ENCODE measurements at regions of chr19 and their contacts with region 1.

Region 1: GRCh38 chr19:29453596-29453995 is 72.2 kb upstream of the VSTM2B start:
- DNase-seq: no peak
- H3K4me3 ChIP-seq: no peak overlapping the region
- H3K27ac ChIP-seq: no peak overlapping the region
- H3K27me3 ChIP-seq: no peaks in the 10 kb centered on the region
- CTCF ChIP-seq: no peak

Region 2: GRCh38 chr19:28596561-28597071 is 857.0 kb before region 1 on chr19:
- CTCF ChIA-PET with region 1: no interaction called
- POLR2A ChIA-PET with region 1: interaction called, 10 read pairs
- DNase-seq: no peak
- H3K4me3 ChIP-seq: no peak overlapping the region
- H3K27ac ChIP-seq: no peak overlapping the region
- H3K27me3 ChIP-seq: no peaks in the 10 kb centered on the region
- CTCF ChIP-seq: no peak

Region 3: DNA sequence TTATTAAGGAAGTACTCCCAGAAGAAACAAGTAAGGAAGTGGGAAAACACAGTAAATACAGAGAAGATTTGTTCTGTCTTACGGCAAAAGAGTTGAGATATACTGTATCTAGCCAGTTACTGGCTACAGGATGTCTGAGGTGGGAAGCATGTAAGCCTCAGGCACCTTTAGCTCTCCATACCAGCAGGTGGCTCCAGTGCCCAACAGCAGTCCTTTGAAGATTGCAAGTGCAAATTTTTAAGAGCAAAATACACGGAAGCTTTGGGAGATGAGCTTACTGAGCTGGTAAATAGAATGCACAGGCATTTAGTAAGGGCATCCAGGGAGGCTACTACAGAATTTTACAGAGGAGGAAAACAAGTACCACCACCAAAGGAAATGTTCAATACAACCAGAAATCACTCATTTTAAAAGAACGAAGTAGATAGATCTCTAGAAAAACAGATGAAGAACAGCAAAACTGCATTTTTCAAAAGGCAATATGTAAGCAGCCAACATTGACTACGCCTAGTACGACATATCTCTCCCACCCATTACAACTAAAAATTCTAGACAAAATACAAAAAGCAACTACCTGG is 14.3 kb after region 1 on chr19:
- CTCF ChIA-PET with region 1: no interaction called
- POLR2A ChIA-PET with region 1: no interaction called
- DNase-seq: no peak
- H3K4me3 ChIP-seq: no peak overlapping the region
- H3K27ac ChIP-seq: no peak overlapping the region
- H3K27me3 ChIP-seq: no peaks in the 10 kb centered on the region
- CTCF ChIP-seq: peak; percentile 30